ENCODE measurements at regions of chr1 and their contacts with region 1.

Region 1: DNA sequence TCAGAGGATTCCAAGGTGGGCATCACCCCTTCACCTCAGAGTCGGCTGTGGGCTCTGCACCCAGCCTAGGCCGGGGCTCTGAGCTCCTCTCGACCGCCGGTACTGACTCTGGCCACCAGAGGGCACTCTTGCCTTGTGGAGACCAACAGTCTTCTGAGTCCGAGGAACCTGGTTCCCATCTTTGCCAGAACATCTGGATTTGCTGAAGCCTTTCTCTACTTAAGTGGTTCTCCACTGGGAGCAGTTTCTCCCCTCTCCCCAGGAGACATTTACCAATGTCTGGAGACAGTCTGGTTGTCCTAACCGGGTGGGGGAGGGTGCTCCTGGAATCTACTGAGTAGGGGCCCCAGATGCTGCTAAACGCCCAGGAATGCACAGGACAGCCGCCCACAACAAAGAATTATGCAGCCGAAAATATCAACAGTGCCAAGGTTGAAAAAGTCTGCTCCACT is 9.4 kb downstream of the ETV3L start:
- DNase-seq: peak; percentile 90
- H3K4me3 Mint-ChIP-seq: no peak overlapping the region
- H3K27ac Mint-ChIP-seq: no peak overlapping the region
- H3K4me1 Mint-ChIP-seq: peaks cover 5% of the 10 kb centered on the region
- H3K27me3 Mint-ChIP-seq: peaks cover 3% of the 10 kb centered on the region

Region 2: DNA sequence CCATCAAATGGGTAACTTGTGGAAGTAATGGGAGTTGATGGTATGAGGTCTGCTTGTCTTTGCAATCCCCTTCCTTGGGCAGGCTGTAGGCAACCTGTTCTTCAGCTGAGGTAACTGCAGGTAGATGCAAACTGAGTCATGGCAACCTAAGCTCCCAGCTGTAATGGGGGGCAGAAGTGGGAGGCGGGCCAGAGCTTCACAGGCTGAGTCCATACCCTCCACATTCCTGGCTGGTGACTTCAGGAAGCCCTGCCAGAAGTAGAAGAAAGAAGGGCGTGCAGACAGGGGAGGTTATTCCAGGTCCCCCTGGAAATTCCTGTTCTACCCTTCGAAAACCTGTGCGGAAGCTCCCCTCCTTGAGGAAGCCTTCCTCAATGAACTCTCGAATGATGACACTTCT is 89.5 kb before region 1 on chr1:
- CTCF ChIA-PET with region 1: no interaction called
- POLR2A ChIA-PET with region 1: no interaction called
- intact Hi-C with region 1: no loop called
- DNase-seq: no peak
- H3K4me3 Mint-ChIP-seq: no peak overlapping the region
- H3K27ac Mint-ChIP-seq: no peak overlapping the region
- H3K4me1 Mint-ChIP-seq: no peaks in the 10 kb centered on the region
- H3K27me3 Mint-ChIP-seq: peaks cover 8% of the 10 kb centered on the region

Region 3: DNA sequence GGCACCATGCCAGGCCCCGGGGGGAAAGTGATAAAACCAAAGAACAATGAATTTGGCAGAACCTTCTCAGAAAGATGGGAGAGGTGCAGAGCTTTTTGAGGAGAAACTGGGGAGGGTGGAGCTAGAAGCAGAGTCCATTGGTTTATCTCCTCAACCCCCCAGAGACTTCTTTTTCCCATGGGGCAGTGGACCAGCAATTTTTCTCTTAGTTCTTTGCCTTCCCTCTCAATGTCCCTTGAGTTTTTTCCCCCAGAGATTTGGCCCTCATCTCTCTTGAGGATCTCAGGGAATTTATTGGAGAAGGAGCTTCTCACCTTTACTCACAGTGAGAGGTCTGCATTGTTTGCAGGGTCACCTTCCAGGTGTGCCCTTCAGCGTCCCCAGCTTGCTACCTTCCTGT is 39.4 kb before region 1 on chr1:
- CTCF ChIA-PET with region 1: no interaction called
- POLR2A ChIA-PET with region 1: no interaction called
- intact Hi-C with region 1: no loop called
- DNase-seq: no peak
- H3K4me3 Mint-ChIP-seq: no peak overlapping the region
- H3K27ac Mint-ChIP-seq: no peak overlapping the region
- H3K4me1 Mint-ChIP-seq: peaks cover 4% of the 10 kb centered on the region
- H3K27me3 Mint-ChIP-seq: peaks cover 47% of the 10 kb centered on the region

Region 4: GRCh38 chr1:157073944-157074767 is 16.1 kb before region 1 on chr1:
- CTCF ChIA-PET with region 1: interaction called, 14 read pairs
- POLR2A ChIA-PET with region 1: no interaction called
- intact Hi-C with region 1: no loop called
- DNase-seq: peak; percentile 54
- H3K4me3 Mint-ChIP-seq: no peak overlapping the region
- H3K27ac Mint-ChIP-seq: no peak overlapping the region
- H3K4me1 Mint-ChIP-seq: peaks cover 3% of the 10 kb centered on the region
- H3K27me3 Mint-ChIP-seq: peaks cover 23% of the 10 kb centered on the region

Region 5: DNA sequence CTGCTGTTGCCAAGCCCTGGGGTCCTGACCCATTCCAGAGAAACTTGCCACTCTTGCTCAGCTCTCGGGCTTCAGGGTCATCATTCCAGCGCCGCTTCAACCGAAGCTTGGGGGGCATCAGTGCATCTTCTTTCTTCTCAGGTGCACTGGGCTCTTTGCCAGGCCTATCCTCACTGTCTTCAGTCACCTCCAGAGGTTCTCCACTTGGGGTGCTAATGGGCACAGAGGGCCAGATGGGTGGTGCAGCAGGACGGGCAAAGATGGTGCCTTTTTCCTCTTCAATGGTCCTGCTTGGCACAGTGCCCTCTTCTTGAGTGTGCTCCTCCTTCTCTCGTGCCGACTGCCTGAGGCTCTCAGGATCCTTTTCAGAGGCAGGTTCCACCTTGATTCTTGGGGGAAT is 34.6 kb after region 1 on chr1:
- CTCF ChIA-PET with region 1: interaction called, 14 read pairs
- POLR2A ChIA-PET with region 1: no interaction called
- intact Hi-C with region 1: no loop called
- DNase-seq: no peak
- H3K4me3 Mint-ChIP-seq: no peak overlapping the region
- H3K27ac Mint-ChIP-seq: no peak overlapping the region
- H3K4me1 Mint-ChIP-seq: peaks cover 25% of the 10 kb centered on the region
- H3K27me3 Mint-ChIP-seq: no peaks in the 10 kb centered on the region

Region 6: DNA sequence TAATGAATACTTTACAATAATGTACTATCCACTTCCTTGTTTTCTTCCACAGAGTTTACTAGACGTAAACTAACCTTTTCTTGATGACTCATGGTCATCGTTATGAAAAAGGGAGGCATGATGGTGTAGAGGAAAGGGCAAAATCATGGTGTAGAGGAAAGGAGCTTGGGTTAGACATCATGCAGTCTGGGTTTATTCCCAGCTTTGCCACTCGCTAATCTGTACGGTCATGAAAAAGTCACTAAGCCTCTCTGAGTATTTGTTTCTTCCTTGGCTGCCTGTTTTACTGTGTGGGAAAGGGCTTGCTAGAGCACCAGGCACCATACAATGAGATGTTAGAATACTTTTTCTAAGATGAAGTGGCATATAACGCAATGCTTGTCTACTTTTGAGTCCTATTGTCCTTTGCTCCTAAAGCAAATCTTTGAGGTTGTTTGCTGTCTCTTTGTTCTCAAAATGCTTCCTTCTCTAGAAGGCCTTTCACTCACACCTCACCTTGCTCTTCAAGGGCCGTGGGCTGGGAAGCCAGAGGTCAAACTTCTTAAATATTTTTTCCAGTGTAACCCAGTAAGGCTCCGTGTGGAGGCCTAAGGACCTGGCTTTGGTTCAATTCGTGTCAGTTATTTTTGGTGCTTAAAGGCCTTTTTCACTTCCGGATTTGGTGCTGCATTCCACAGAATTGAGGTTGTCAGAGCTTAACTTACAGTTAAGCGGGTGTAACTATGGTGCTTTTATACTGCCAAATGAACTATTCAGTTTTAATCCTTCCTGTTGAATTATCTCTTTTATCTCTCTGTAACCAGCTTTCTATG is 57.9 kb after region 1 on chr1:
- CTCF ChIA-PET with region 1: interaction called, 643 read pairs
- POLR2A ChIA-PET with region 1: no interaction called
- intact Hi-C with region 1: no loop called
- DNase-seq: no peak
- H3K4me3 Mint-ChIP-seq: no peak overlapping the region
- H3K27ac Mint-ChIP-seq: no peak overlapping the region
- H3K4me1 Mint-ChIP-seq: peaks cover 20% of the 10 kb centered on the region
- H3K27me3 Mint-ChIP-seq: no peaks in the 10 kb centered on the region

Region 7: DNA sequence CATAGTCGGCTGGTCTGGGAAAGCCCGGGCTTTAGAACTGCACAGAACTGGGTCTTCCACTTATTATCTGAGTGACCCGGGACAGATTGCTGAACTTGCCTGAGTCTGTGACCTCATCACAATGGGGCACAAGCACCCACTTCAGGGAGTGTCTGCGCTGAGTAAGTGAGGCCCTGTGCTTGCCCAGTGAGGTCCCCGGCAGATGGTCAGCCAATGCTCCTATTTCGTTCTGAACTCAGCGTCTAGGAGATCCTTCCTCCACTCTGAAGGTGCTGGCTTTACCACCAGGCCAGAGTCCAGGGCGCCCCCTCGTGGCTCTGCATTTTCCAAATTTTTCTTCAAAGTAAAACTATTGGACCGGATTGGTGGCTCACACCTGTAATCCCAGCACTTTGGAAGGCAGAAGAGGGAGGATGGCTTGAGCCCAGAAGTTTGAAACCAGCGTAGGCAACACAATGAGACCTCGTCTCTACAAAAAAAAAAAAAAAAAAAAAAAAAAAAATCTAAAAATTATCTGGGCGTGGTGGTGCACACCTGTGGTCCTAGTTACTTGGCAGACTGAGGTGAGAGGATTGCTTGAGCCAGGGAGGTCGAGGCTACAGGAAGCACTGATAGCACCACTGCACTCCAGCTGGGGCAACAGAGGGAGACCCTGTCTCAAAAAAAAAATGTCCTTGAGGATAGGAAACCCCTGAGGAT is 400.4 kb after region 1 on chr1:
- CTCF ChIA-PET with region 1: no interaction called
- POLR2A ChIA-PET with region 1: no interaction called
- intact Hi-C with region 1: loop called (anchors 5 kb)
- DNase-seq: peak; percentile 75
- H3K4me3 Mint-ChIP-seq: no peak overlapping the region
- H3K27ac Mint-ChIP-seq: no peak overlapping the region
- H3K4me1 Mint-ChIP-seq: no peaks in the 10 kb centered on the region
- H3K27me3 Mint-ChIP-seq: peaks cover 19% of the 10 kb centered on the region